SK-N-SH (cell line): ENCODE measurements at regions of chr4 and their contacts with region 1.

Region 1: GRCh38 chr4:1628892-1629698 is 55.0 kb downstream of the FAM53A start:
- DNase-seq: peak; percentile 91
- H3K4me3 ChIP-seq: no peak overlapping the region; a peak in 1 of 4 replicates
- H3K27ac ChIP-seq: no peak overlapping the region
- H3K4me1 ChIP-seq: no peaks in the 10 kb centered on the region; a peak in 1 of 4 replicates
- H3K27me3 ChIP-seq: no peaks in the 10 kb centered on the region
- CTCF ChIP-seq: peak; percentile 83
- EP300 ChIP-seq: no peak
- RAD21 ChIP-seq: peak; percentile 80

Region 2: GRCh38 chr4:1351854-1352633 is 277.1 kb before region 1 on chr4:
- CTCF ChIA-PET with region 1: interaction called, 98 read pairs
- POLR2A ChIA-PET with region 1: no interaction called
- DNase-seq: peak; percentile 91
- H3K4me3 ChIP-seq: peak overlapping the region in 1 of 2 experiments; percentile 17; a peak in 1 of 4 replicates
- H3K27ac ChIP-seq: no peak overlapping the region
- H3K4me1 ChIP-seq: peaks cover 0 to 14% of the 10 kb centered on the region in 2 experiments; a peak in 1 of 4 replicates
- H3K27me3 ChIP-seq: no peaks in the 10 kb centered on the region
- CTCF ChIP-seq: peak; percentile 91
- EP300 ChIP-seq: no peak
- RAD21 ChIP-seq: peak; percentile 70

Region 3: DNA sequence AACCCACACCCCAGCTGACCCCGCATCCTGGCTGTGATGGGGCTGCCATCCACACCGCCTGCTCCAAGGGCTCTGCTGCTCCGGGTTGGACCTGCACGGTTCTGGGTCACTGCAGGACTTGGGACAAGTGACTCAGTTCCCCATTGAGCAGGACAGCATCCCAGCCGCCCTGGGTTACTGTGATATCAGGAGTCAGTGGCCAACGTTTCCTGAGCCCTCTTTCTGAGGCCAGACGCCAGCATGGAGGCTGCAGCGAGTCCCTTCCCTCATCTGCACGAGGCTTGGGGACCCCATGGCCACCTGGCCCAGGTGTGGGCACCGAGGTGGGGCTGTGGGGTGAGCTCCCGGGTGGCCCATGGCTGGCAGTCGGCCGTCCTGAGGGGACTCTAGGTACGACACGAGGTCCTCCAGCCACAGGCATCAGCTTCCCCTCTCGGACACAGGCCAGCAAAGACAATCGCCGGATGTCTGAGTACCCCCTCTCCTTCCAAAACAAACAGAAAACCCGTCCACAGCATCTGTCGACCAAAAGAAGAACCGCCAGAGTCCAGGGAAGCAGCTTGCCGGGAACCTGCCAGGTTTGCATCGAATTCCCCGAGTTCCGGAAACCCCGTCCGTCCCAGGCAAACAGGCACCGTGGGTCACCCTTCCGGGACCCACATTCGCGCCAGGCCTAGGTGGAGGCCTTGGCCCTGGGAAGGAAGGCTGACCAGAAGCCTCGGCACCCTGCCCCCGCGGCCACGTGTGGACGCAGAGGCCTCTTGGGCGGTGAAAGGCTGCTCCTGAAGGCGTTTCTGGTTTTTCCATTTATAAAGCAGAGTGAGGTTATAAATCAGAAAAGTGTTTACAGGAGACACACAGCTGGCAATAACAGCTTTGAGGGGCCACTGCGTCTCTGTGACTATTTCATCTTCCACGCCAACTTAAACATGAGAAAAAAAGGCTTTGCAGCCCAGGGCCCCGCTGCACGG is 81.0 kb before region 1 on chr4:
- CTCF ChIA-PET with region 1: interaction called, 11 read pairs
- POLR2A ChIA-PET with region 1: no interaction called
- DNase-seq: no peak
- H3K4me3 ChIP-seq: no peak overlapping the region
- H3K27ac ChIP-seq: no peak overlapping the region
- H3K4me1 ChIP-seq: no peaks in the 10 kb centered on the region
- H3K27me3 ChIP-seq: peaks cover 24% of the 10 kb centered on the region
- CTCF ChIP-seq: no peak
- EP300 ChIP-seq: no peak
- RAD21 ChIP-seq: no peak

Region 4: DNA sequence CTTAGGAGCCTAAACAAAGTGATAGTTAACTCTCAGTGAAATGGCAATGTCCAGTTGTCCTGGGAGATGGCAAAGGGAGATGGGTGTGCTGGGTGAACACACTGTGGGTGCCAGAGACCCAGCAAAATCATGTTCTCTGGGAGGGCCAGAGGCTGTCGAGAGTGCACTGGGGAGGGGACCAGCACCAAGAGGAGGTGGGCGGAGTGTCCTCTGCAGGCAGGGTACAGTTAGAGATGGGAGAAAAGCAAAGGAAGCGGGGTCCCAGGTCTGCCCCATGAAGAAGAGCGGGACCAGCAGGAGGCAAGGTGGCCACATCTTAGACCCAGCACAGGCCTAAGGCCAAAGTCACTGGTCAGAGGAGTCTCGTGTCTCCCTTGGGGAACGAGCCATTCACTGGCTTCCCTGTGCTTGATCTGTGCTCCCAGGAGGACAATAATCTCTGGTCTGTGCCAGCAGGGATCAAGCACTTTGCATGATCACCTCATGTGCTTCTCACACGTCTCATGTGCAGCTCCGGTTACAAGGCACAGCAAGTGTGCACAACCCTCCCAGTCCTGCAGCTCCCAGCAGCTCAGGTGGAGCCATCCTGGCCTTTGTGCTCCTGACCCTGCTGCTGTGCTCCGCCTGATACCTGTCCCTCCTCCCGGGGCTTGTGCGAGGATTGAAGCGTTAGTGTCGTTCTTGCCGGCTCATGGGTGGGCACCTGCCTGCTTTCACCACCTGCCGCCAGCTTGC is 45.9 kb before region 1 on chr4:
- CTCF ChIA-PET with region 1: interaction called, 16 read pairs
- POLR2A ChIA-PET with region 1: no interaction called
- DNase-seq: no peak
- H3K4me3 ChIP-seq: no peak overlapping the region
- H3K27ac ChIP-seq: no peak overlapping the region
- H3K4me1 ChIP-seq: peaks cover 0 to 11% of the 10 kb centered on the region in 2 experiments; a peak in 1 of 4 replicates
- H3K27me3 ChIP-seq: no peaks in the 10 kb centered on the region
- CTCF ChIP-seq: no peak
- EP300 ChIP-seq: no peak
- RAD21 ChIP-seq: no peak

Region 5: DNA sequence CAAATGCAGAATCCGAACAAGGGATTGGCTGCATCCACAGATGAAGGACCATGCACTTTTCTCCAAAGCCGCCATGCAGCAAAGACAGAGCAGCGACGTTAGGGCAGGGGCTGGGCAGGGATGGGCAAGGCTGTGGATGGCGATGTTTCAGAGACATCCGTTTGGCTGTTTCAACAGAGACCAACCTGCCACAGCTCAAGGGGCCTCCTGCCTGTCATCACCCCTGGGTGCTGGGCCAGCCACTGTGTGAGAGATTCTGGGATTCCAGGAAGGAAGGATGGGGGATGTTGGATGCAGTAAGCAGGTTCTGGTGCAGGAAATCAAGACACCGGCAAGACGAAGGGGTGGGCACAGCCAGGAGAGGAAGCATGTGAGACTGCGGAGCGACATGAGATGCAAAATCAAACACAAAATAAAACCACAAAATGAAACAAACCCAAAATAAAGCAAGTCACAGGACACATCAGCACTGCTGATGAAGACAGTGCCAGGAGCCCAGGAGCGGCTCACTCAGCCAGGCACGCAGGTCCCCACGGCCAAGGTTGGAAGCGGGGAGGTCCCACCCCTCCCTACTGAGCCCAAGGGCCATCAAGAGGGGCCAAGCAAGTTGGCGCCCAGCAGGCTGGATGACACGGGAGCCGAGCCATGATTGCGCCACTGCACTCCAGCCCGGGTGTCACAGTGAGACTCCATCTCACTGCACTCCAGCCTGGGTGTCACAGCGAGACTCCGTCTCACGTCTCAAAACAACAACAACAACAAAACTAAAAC is 13.1 kb before region 1 on chr4:
- CTCF ChIA-PET with region 1: interaction called, 15 read pairs
- POLR2A ChIA-PET with region 1: no interaction called
- DNase-seq: no peak
- H3K4me3 ChIP-seq: no peak overlapping the region
- H3K27ac ChIP-seq: no peak overlapping the region
- H3K4me1 ChIP-seq: no peaks in the 10 kb centered on the region
- H3K27me3 ChIP-seq: no peaks in the 10 kb centered on the region
- CTCF ChIP-seq: no peak
- EP300 ChIP-seq: no peak
- RAD21 ChIP-seq: no peak

Region 6: DNA sequence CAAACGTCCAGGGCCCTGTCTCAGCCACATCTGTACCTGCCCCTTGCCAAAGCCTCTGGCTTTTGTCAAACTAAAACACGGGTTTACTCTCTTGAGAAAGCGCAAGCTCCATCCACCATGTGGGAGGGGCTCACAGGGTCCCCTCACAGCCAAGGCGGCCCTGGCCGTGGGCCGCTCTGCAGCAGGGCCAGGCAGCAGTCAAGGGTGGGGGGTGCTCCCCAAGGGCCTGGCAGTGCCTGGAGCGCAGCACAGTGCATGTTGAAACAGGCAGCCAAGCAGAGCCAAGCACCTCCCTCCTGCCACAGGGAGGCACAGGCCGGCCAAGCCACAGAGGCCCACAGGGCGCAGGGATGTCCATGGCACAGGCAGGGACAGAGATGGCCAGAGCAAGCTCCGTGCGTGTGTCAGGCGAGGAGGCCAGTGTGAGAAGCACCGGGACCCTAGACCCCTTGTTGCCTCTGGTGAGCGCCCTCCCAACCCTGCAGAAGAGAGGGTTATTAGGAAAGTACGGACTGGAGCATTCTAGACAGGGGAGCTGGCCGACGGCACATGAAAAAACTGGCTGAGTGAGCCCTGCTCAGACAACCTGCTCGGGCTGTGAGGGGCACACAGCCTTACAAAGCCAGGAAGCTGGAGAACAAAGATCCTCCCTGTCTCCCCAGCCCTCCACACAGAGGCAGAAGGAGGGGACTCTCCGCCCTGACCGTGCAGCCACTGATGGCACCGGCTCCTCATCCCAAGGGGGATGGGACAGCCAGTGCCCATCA is 16.0 kb after region 1 on chr4:
- CTCF ChIA-PET with region 1: interaction called, 29 read pairs
- POLR2A ChIA-PET with region 1: no interaction called
- DNase-seq: peak; percentile 86
- H3K4me3 ChIP-seq: no peak overlapping the region
- H3K27ac ChIP-seq: peak overlapping the region in 1 of 2 experiments; percentile 29; a peak in 2 of 4 replicates
- H3K4me1 ChIP-seq: peaks cover 0 to 19% of the 10 kb centered on the region in 2 experiments; a peak in 1 of 4 replicates
- H3K27me3 ChIP-seq: no peaks in the 10 kb centered on the region
- CTCF ChIP-seq: no peak
- EP300 ChIP-seq: peak in 1 of 2 experiments; percentile 23; a peak in 1 of 4 replicates
- RAD21 ChIP-seq: no peak

Region 7: DNA sequence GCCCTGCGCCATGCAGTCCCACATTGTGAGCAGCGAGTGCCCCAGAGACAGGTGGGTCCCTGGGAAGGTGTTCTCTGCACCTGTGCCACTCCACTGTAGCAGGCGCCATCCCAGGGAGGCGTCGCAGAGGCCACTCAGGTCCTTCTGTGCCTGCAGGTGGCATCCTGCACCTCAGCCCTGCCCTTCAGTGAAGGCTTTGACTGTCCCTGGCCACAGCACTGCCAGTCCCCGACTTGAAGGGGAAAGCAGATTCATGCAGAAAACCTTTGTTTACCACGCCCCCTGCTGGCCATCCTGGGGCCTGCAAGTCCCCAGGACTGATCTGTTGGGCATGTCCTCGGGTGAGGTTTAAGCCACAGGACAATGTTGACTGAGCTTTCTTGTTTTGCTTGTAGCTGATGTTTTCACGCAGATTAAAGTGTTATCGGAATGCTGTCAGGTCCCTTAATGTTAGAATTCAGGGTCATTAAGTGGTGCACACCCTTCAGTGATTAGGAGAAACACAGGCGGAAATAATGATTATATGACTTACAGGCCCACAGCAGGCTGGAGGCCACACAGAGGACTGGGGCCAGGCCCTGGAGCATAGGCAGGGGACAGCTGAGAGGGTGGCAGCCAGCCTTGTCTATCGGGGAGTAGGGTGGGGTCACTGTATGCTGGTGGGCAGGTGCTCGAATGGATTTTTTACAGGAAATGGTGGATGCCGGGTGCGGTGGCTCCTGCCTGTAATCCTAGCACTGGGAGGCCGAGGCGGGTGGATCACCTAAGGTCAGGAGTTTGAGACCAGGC is 97.2 kb after region 1 on chr4:
- CTCF ChIA-PET with region 1: interaction called, 10 read pairs
- POLR2A ChIA-PET with region 1: no interaction called
- DNase-seq: peak; percentile 89
- H3K4me3 ChIP-seq: peak overlapping the region in 1 of 2 experiments; percentile 22; a peak in 1 of 4 replicates
- H3K27ac ChIP-seq: peak overlapping the region; percentile 73 to 82
- H3K4me1 ChIP-seq: peaks cover 26 to 28% of the 10 kb centered on the region in 2 experiments; a peak in 3 of 4 replicates
- H3K27me3 ChIP-seq: no peaks in the 10 kb centered on the region
- CTCF ChIP-seq: peak; percentile 97
- EP300 ChIP-seq: no peak
- RAD21 ChIP-seq: peak; percentile 82

Region 8: DNA sequence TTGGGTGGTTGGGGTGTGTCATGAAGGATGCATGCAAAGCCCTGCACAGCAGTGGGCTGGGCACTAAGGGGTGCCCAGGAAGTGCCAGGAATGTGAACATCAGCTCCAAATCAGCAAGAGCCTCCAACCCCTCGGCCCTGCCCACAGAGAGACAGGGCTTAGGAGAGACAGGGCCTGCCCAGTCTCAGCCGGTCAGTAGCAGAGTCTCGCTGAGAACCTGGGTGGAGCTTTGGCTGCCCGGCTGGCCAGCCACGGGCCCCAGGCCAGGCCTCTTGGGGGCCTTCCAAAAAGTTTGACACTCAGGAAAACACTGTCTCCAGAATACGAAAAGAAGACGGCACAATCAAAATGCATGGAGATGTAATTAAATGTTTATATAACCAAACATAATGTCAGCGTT is 637.1 kb after region 1 on chr4:
- CTCF ChIA-PET with region 1: no interaction called
- POLR2A ChIA-PET with region 1: no interaction called
- DNase-seq: peak; percentile 48
- H3K4me3 ChIP-seq: no peak overlapping the region
- H3K27ac ChIP-seq: peak overlapping the region in 1 of 2 experiments; percentile 44; a peak in 1 of 4 replicates
- H3K4me1 ChIP-seq: peaks cover 0 to 50% of the 10 kb centered on the region in 2 experiments; a peak in 1 of 4 replicates
- H3K27me3 ChIP-seq: no peaks in the 10 kb centered on the region
- CTCF ChIP-seq: no peak
- EP300 ChIP-seq: no peak
- RAD21 ChIP-seq: no peak